PC-9 (cell line): ENCODE measurements at regions of chr5 and their contacts with region 1.

Region 1: GRCh38 chr5:71782771-71783770 is 64.0 kb downstream of the CARTPT start:
- DNase-seq: peak in 1 of 2 experiments; percentile 74
- H3K4me3 ChIP-seq: no peak overlapping the region
- H3K27ac ChIP-seq: no peak overlapping the region
- H3K4me1 ChIP-seq: no peaks in the 10 kb centered on the region
- H3K27me3 ChIP-seq: no peaks in the 10 kb centered on the region
- CTCF ChIP-seq: peak; percentile 80

Region 2: DNA sequence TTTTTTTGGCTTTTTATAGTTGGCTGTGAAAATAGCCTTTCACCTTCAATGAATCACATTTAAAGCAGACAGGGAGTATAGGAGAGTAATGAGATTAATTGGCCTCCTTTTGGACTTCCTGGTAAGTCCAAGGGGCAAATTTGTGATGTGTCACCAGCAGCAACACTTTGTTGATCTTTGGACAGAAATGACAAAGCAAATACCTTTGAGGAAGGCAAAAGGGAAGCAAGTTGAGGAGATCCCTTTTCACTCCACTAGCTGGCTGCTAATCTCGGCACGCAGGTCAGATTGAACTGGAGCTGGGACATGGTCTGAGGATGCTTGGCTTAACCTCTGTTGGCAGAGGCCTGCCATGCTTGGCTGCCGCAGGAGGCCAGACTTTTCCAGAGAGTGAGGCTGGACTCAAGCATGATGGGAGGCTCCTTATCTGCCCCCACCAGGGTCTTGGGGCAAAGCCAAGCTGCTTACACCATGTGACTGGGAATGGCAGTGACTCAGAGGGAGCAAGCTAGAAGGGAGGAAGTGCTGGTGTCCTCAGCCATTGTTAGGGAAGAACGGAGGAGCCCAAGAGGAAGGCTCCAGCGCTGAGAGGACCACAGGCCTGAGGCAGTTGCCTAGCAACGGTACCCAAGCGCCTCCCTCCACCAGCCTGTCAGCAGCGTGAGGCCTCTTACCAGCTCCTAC is 149.7 kb after region 1 on chr5:
- CTCF ChIA-PET with region 1: no interaction called
- POLR2A ChIA-PET with region 1: no interaction called
- intact Hi-C with region 1: loop called (anchors 2 kb)
- DNase-seq: peak; percentile 77 to 99
- H3K4me3 ChIP-seq: no peak overlapping the region
- H3K27ac ChIP-seq: peak overlapping the region; percentile 97
- H3K4me1 ChIP-seq: peaks cover 42% of the 10 kb centered on the region
- H3K27me3 ChIP-seq: no peaks in the 10 kb centered on the region
- CTCF ChIP-seq: peak; percentile 38; the same call in 1 of the 2 replicates

Region 3: GRCh38 chr5:72108202-72109061 is 325.4 kb after region 1 on chr5:
- CTCF ChIA-PET with region 1: no interaction called
- POLR2A ChIA-PET with region 1: no interaction called
- intact Hi-C with region 1: loop called (anchors 1 kb)
- DNase-seq: peak; percentile 56 to 66
- H3K4me3 ChIP-seq: peak overlapping the region; percentile 100
- H3K27ac ChIP-seq: peak overlapping the region; percentile 69
- H3K4me1 ChIP-seq: peaks cover 20% of the 10 kb centered on the region
- H3K27me3 ChIP-seq: no peaks in the 10 kb centered on the region
- CTCF ChIP-seq: no peak

Region 4: DNA sequence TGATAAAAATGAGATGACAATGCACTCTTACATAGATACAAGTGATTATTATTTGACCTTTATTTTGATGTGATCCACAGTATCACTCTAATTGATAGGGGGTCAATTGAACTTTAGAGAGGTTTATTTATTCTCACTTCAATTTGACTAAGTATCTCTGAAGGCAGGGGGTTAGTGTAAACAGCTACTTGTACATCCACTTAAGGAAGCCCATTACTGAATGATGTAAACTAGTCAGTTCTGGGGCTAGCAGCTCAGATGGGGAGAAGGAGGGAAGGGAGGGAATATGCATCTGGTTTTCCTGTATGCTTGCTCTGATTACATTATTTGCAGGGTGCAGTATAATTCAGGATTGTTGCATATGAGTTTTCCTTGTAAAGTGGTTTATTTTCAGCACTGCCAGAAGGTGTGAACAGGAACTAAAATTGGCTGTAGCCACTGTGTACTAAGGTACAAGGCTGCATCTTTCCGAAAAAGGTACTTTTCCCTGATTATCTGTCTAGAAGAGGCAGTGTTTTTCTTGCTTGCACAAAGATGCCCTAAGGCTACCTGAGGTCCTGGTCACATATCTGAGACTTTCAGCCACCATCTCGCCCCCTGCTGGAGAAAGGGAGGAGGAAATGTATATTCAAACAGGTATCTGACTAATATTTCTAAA is 485.8 kb after region 1 on chr5:
- CTCF ChIA-PET with region 1: no interaction called
- POLR2A ChIA-PET with region 1: no interaction called
- intact Hi-C with region 1: loop called (anchors 2 kb)
- DNase-seq: peak; percentile 61 to 66
- H3K4me3 ChIP-seq: no peak overlapping the region
- H3K27ac ChIP-seq: no peak overlapping the region
- H3K4me1 ChIP-seq: no peaks in the 10 kb centered on the region
- H3K27me3 ChIP-seq: no peaks in the 10 kb centered on the region
- CTCF ChIP-seq: peak; percentile 89

Region 5: GRCh38 chr5:72816311-72817145 is 1033.5 kb after region 1 on chr5 and contains the start of gene TNPO1:
- CTCF ChIA-PET with region 1: interaction called, 3 read pairs
- POLR2A ChIA-PET with region 1: no interaction called
- intact Hi-C with region 1: loop called (anchors 5 kb)
- DNase-seq: peak; percentile 75 to 92
- H3K4me3 ChIP-seq: peak within 1 kb of the TSS; percentile 81
- H3K27ac ChIP-seq: peak within 1 kb of the TSS; percentile 75
- H3K4me1 ChIP-seq: peaks cover 34% of the 10 kb centered on the region
- H3K27me3 ChIP-seq: no peaks in the 10 kb centered on the region
- CTCF ChIP-seq: no peak
- total RNA-seq, gene TNPO1: 135 and 185 TPM in 2 replicates